CD4-positive, alpha-beta T cell (primary cell): ENCODE measurements at regions of chr19 and their contacts with region 1.

Region 1: GRCh38 chr19:48445606-48446481 is at the start of gene GRWD1:
- DNase-seq: peak; percentile 85 to 99 (median 91)
- ATAC-seq: peak; percentile 94
- H3K4me3 ChIP-seq: peak within 1 kb of the TSS; percentile 85
- H3K4me3 Mint-ChIP-seq: peak within 1 kb of the TSS; percentile 93
- H3K27ac ChIP-seq: peak within 1 kb of the TSS; percentile 58 to 74
- H3K27ac Mint-ChIP-seq: peak within 1 kb of the TSS; percentile 78
- H3K4me1 ChIP-seq: peaks cover 31% of the 10 kb centered on the region
- H3K4me1 Mint-ChIP-seq: peaks cover 25% of the 10 kb centered on the region
- H3K27me3 ChIP-seq: peaks cover 15 to 25% of the 10 kb centered on the region in 2 experiments
- H3K27me3 Mint-ChIP-seq: peaks cover 28% of the 10 kb centered on the region
- CTCF ChIP-seq: no peak
- total RNA-seq, gene GRWD1: 21.4 to 21.7 TPM

Region 2: GRCh38 chr19:48391107-48391986 is 54.5 kb before region 1 on chr19 and contains the start of gene KDELR1:
- CTCF ChIA-PET with region 1: interaction called, 8 read pairs
- POLR2A ChIA-PET with region 1: interaction called, 3 read pairs
- intact Hi-C with region 1: loop called in 1 of 2 experiments (anchors 2 kb)
- DNase-seq: peak; percentile 56 to 85 (median 69)
- ATAC-seq: peak; percentile 79
- H3K4me3 ChIP-seq: peak within 1 kb of the TSS; percentile 89
- H3K4me3 Mint-ChIP-seq: peak within 1 kb of the TSS; percentile 94
- H3K27ac ChIP-seq: peak within 1 kb of the TSS; percentile 71 to 79
- H3K27ac Mint-ChIP-seq: peak within 1 kb of the TSS; percentile 93
- H3K4me1 ChIP-seq: peaks cover 57% of the 10 kb centered on the region
- H3K4me1 Mint-ChIP-seq: peaks cover 34% of the 10 kb centered on the region
- H3K27me3 ChIP-seq: peaks cover 31% of the 10 kb centered on the region in 2 experiments
- H3K27me3 Mint-ChIP-seq: peaks cover 29% of the 10 kb centered on the region
- CTCF ChIP-seq: peak; percentile 93
- total RNA-seq, gene KDELR1: 32.2 to 39.6 TPM

Region 3: GRCh38 chr19:48415395-48415794 is 30.4 kb before region 1 on chr19:
- CTCF ChIA-PET with region 1: no interaction called
- POLR2A ChIA-PET with region 1: interaction called, 4 read pairs
- intact Hi-C with region 1: loop called in 1 of 2 experiments (anchors 2 kb)
- DNase-seq: peak; percentile 50 to 90 (median 68)
- ATAC-seq: peak; percentile 74
- H3K4me3 ChIP-seq: peak overlapping the region; percentile 49
- H3K4me3 Mint-ChIP-seq: peak overlapping the region; percentile 34
- H3K27ac ChIP-seq: no peak overlapping the region
- H3K27ac Mint-ChIP-seq: no peak overlapping the region
- H3K4me1 ChIP-seq: peaks cover 36% of the 10 kb centered on the region
- H3K4me1 Mint-ChIP-seq: peaks cover 29% of the 10 kb centered on the region
- H3K27me3 ChIP-seq: peaks cover 0 to 11% of the 10 kb centered on the region in 2 experiments
- H3K27me3 Mint-ChIP-seq: peaks cover 22% of the 10 kb centered on the region
- CTCF ChIP-seq: no peak

Region 4: GRCh38 chr19:48433337-48433736 is 12.5 kb before region 1 on chr19:
- CTCF ChIA-PET with region 1: no interaction called
- POLR2A ChIA-PET with region 1: no interaction called
- intact Hi-C with region 1: no loop called
- DNase-seq: no peak
- ATAC-seq: no peak
- H3K4me3 ChIP-seq: no peak overlapping the region
- H3K4me3 Mint-ChIP-seq: no peak overlapping the region
- H3K27ac ChIP-seq: no peak overlapping the region
- H3K27ac Mint-ChIP-seq: no peak overlapping the region
- H3K4me1 ChIP-seq: no peaks in the 10 kb centered on the region
- H3K4me1 Mint-ChIP-seq: no peaks in the 10 kb centered on the region
- H3K27me3 ChIP-seq: peaks cover 7 to 15% of the 10 kb centered on the region in 2 experiments
- H3K27me3 Mint-ChIP-seq: peaks cover 21% of the 10 kb centered on the region
- CTCF ChIP-seq: no peak

Region 5: DNA sequence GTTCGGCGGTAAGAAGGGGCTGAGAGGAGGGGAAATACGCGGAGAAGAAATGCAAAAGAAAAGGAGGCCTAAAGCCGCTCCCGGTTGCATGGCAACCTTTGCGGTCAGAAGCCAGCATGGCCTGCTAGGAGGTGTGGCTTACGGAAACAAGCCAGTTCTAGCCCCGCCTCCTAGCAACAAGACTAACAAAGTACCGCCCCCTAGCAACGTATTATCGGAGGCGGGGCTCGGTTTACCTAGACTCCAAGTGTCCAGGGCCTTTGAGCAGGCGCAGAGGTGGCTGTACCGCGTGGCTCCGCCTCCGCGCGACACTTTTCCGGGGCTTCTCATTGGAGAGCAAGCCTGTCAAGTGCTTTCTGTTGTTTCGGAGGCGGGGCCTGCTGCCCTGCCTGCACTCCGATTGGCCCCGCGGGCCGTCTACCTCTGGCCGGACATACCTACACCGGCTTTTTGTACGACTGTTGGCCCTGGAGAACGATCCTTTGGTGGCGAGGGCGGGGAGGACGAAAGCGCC is 23.0 kb after region 1 on chr19:
- CTCF ChIA-PET with region 1: no interaction called
- POLR2A ChIA-PET with region 1: interaction called, 3 read pairs
- intact Hi-C with region 1: loop called (anchors 1 to 2 kb)
- DNase-seq: peak; percentile 98 to 100 (median 99)
- ATAC-seq: peak; percentile 89
- H3K4me3 ChIP-seq: peak overlapping the region; percentile 96
- H3K4me3 Mint-ChIP-seq: peak overlapping the region; percentile 90
- H3K27ac ChIP-seq: peak overlapping the region; percentile 25 to 79
- H3K27ac Mint-ChIP-seq: peak overlapping the region; percentile 82
- H3K4me1 ChIP-seq: peaks cover 22% of the 10 kb centered on the region
- H3K4me1 Mint-ChIP-seq: peaks cover 21% of the 10 kb centered on the region
- H3K27me3 ChIP-seq: no peaks in the 10 kb centered on the region
- H3K27me3 Mint-ChIP-seq: no peaks in the 10 kb centered on the region
- CTCF ChIP-seq: no peak

Region 6: DNA sequence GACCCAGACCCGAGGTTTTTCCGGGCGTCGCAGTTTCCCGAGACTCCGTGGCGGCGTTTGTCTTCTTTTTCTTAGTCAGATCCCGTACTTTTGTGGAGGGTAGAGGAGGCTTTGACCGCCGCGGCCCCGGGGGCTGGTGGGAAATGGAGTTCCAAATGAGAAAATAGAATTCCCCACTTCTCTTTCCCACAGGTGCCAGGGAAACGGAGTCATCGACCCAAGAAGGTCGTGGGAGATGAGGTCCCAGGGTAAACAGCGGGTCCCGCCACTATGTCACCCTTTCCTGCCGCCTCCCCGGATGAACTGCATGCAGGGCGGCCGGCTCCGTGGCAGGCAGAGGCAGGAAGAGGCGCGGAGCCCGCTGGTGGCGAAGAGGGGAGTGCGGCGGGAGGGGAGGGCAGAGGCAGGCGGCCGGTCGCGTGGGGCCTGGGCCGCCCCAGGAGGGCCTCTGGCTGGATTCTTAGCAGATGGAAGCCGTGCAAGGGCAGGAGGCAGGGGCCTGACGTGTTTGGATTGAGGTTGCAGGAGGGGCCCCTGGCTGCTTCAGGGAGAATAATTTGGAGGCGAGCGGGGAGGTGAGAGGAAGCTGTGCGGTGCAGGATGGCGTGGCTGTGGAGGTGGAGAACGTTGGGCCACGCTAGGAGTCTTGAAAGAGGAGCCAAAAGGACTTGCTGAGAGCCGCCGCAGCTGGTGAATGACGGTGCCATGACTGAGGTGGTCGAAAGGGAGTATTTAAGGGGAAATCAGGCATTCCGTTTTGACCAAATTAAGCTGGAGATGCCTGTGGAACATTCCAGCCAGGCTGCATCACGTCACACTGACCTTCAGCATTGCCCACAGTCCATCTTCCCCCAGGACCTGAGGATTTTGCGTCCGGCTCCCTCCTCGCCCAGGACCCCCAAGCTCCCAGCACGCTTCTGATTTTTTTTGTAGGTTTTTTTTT is 35.0 kb after region 1 on chr19:
- CTCF ChIA-PET with region 1: no interaction called
- POLR2A ChIA-PET with region 1: interaction called, 4 read pairs
- intact Hi-C with region 1: loop called in 1 of 2 experiments (anchors 1 kb)
- DNase-seq: peak in 13 of 14 experiments; percentile 32 to 77 (median 57)
- ATAC-seq: peak; percentile 81
- H3K4me3 ChIP-seq: peak overlapping the region; percentile 71
- H3K4me3 Mint-ChIP-seq: peak overlapping the region; percentile 88
- H3K27ac ChIP-seq: peak overlapping the region; percentile 77 to 79
- H3K27ac Mint-ChIP-seq: peak overlapping the region; percentile 88
- H3K4me1 ChIP-seq: peaks cover 22% of the 10 kb centered on the region
- H3K4me1 Mint-ChIP-seq: peaks cover 27% of the 10 kb centered on the region
- H3K27me3 ChIP-seq: no peaks in the 10 kb centered on the region
- H3K27me3 Mint-ChIP-seq: no peaks in the 10 kb centered on the region
- CTCF ChIP-seq: no peak